Ascending aorta (tissue), 2 donors: ENCODE measurements at regions of chr16 and their contacts with region 1.

Region 1: DNA sequence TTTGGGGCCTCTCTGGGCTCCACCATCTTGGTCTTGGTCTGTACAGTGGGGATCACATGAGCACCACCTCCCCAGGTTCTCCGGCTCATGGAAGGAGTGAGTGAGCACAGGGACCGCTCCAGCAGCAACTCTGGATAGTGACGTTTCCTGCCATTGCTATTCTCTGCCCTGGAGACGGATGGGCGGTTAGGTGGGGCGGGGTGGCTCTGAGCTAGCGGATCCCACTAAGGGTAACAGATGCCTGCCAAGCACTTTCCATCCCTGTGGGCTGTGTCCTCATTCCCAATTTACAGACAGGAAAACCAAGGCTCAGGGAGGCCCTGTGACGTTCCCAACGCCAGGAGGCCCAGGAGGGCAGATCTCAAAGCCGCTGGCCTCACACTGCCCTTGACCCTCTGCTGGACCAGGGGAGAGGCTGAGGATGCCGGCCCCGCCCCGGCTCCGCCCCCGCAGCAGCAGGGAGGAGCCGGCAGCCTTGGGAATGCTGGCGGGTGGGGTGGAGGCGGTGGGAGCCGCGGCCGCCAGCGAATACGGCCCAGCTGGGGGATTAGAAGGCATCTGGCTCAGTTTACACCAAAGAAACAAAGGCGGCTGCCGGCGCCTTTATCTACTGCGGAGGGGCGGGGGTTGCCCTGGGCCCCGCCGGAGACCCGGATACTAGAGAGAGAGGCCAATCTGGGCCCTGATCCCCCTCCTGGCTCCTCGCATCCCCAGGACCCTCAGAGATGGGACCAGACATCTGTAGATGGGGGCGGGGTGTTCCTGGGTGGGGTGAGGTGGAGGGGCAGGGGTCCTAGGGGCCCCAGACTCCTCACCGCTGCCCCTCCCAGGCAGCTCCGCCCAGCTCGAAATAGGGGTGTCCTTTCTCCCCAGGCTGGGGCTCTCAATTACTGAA is 122.3 kb upstream of the CIBAR2 start:
- DNase-seq: peak in 1 of 2 donors; percentile 79
- H3K4me3 ChIP-seq: peak overlapping the region; percentile 48 to 58
- H3K27ac ChIP-seq: peak overlapping the region; percentile 70 to 74
- H3K4me1 ChIP-seq: peaks cover 20 to 45% of the 10 kb centered on the region in 2 donors
- H3K27me3 ChIP-seq: no peaks in the 10 kb centered on the region
- CTCF ChIP-seq: no peak

Region 2: GRCh38 chr16:85206472-85207356 is 27.8 kb before region 1 on chr16:
- intact Hi-C with region 1: loop called (anchors 2 kb)
- DNase-seq: peak in 1 of 2 donors; percentile 82
- H3K4me3 ChIP-seq: peak overlapping the region; percentile 33 to 38
- H3K27ac ChIP-seq: peak overlapping the region; percentile 63 to 77
- H3K4me1 ChIP-seq: peaks cover 35 to 70% of the 10 kb centered on the region in 2 donors
- H3K27me3 ChIP-seq: no peaks in the 10 kb centered on the region
- CTCF ChIP-seq: no peak